IMR-90 (cell line): ENCODE measurements at regions of chr2 and their contacts with region 1.

Region 1: DNA sequence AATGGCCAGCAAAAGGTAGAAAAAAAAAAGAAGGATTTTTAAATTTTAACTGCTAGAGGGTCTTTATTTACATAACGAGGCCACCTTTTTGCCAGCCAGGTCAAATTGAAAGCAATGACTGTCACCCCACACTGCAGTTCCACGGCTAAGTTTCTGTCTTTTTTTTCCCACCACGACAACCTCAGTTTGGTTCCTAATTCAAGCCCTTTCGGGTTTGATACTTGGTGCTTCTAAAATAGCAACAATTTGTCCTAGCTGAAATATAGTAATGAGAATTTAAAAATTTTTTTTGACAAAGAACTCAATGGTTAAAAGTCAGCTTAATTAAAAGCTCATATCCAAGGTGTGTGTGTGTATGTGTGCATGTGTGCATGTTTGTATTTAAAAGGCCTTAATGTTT is 16.4 kb upstream of the NMS start:
- DNase-seq: no peak
- ATAC-seq: no peak
- H3K4me3 ChIP-seq: no peak overlapping the region
- H3K27ac ChIP-seq: no peak overlapping the region
- H3K4me1 ChIP-seq: no peaks in the 10 kb centered on the region
- H3K27me3 ChIP-seq: peaks cover 4% of the 10 kb centered on the region
- CTCF ChIP-seq: no peak
- POLR2A ChIP-seq: no peak
- RAD21 ChIP-seq: no peak

Region 2: DNA sequence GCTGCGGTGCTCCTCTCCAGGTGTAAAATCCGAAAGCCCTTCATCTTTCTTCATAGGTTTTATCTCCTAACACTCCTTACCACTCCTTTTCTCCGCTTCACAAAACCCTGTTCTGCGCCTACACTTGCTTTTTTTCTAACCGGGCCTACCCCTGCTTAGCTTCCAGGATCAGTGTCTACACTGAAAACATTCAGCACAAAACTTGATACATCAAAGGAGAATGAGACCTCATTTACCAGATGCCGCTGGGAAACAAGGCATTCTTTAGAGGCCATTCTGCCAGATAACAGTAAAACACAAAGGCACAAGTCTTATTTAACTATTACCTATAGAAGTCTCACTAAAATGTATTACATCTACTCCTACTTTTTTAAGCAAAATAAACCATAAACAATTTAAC is 49.4 kb before region 1 on chr2:
- CTCF ChIA-PET with region 1: no interaction called
- POLR2A ChIA-PET with region 1: interaction called, 10 read pairs
- dilution Hi-C with region 1: no loop called
- in situ Hi-C with region 1: no loop called
- intact Hi-C with region 1: no loop called
- DNase-seq: no peak
- ATAC-seq: no peak
- H3K4me3 ChIP-seq: no peak overlapping the region
- H3K27ac ChIP-seq: no peak overlapping the region
- H3K4me1 ChIP-seq: no peaks in the 10 kb centered on the region
- H3K27me3 ChIP-seq: no peaks in the 10 kb centered on the region
- CTCF ChIP-seq: no peak
- POLR2A ChIP-seq: no peak
- RAD21 ChIP-seq: no peak